ENCODE measurements at regions of chr1 and their contacts with region 1.

Region 1: GRCh38 chr1:204417231-204417997 is 5.8 kb upstream of the PPP1R15B start:
- DNase-seq: peak; percentile 83
- ATAC-seq: peak; percentile 86
- H3K4me3 ChIP-seq: peak overlapping the region; percentile 29 to 48
- H3K27ac ChIP-seq: peak overlapping the region; percentile 89
- H3K4me1 ChIP-seq: peaks cover 28 to 61% of the 10 kb centered on the region in 2 experiments
- H3K27me3 ChIP-seq: no peaks in the 10 kb centered on the region
- CTCF ChIP-seq: no peak
- POLR2A ChIP-seq: peak; percentile 32
- RAD21 ChIP-seq: no peak

Region 2: DNA sequence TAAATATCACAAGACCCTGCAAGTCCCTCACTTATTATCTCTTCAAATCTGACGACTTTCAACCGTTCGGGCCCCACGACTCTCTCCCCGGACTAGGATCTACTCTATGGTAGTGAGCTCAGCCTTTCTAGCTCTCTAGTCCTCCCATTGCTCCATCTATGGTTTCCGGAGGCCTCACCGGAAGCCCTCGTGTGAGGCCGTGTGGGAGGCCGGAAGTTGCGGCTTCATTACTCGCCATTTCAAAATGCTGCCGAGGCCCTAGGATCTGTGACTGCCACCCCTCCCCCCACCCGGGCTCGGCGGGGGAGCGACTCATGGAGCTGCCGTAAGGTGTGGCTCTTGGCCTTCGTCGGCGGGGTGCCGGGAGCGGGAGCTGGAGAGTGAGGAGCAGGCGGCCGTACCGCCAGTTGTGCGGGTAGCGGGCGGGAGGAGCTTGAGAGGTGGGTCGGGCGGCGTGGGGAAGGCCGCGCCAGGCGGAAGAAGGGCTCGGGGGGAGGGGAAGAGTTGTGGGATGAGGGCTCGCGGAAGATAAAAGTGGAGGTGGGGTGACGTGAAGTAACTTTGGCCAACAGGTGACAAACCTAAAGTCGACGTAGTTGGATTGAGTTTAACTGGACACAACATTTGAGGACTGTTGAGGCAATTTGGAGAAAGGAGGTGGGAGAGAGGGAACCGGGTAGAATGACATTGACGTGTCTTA is 98.9 kb after region 1 on chr1 and contains the start of gene MDM4:
- CTCF ChIA-PET with region 1: interaction called, 3 read pairs
- POLR2A ChIA-PET with region 1: interaction called, 13 read pairs
- RAD21 ChIA-PET with region 1: no interaction called
- intact Hi-C with region 1: no loop called
- DNase-seq: peak; percentile 97
- ATAC-seq: peak; percentile 94
- H3K4me3 ChIP-seq: peak within 1 kb of the TSS; percentile 79
- H3K27ac ChIP-seq: peak within 1 kb of the TSS; percentile 90
- H3K4me1 ChIP-seq: peaks cover 20% of the 10 kb centered on the region in 2 experiments
- H3K27me3 ChIP-seq: no peaks in the 10 kb centered on the region
- CTCF ChIP-seq: no peak
- POLR2A ChIP-seq: peak; percentile 85
- RAD21 ChIP-seq: no peak
- total RNA-seq, gene MDM4: 79.5 TPM

Measured in HCT116 (cell line).